K562 (cell line): ENCODE measurements at regions of chr3 and their contacts with region 1.

Region 1: DNA sequence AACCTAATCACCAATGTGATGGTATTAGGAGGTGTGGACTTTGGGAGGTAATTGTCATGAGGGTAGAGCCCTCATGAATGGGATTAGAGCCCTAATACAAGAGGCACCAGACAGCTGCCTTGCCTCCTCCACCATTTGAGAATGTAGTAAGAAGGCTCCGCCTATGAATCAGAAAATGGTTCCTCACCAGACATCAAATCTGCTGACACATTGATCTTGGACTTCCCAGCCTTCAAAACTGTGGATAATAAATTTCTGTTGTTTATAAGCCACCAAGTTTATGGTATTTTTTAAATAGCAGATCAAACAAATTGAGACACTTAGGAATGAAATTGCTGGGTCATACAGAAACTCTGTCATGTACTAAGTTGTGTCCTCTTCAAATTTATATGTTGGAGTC is 56.8 kb upstream of the COL6A5 start:
- DNase-seq: no peak
- ATAC-seq: no peak
- H3K4me3 ChIP-seq: no peak overlapping the region
- H3K27ac ChIP-seq: no peak overlapping the region
- H3K4me1 ChIP-seq: no peaks in the 10 kb centered on the region; a peak in 1 of 5 replicates
- H3K27me3 ChIP-seq: no peaks in the 10 kb centered on the region
- CTCF ChIP-seq: no peak
- EP300 ChIP-seq: no peak
- POLR2A ChIP-seq: no peak
- RAD21 ChIP-seq: no peak

Region 2: DNA sequence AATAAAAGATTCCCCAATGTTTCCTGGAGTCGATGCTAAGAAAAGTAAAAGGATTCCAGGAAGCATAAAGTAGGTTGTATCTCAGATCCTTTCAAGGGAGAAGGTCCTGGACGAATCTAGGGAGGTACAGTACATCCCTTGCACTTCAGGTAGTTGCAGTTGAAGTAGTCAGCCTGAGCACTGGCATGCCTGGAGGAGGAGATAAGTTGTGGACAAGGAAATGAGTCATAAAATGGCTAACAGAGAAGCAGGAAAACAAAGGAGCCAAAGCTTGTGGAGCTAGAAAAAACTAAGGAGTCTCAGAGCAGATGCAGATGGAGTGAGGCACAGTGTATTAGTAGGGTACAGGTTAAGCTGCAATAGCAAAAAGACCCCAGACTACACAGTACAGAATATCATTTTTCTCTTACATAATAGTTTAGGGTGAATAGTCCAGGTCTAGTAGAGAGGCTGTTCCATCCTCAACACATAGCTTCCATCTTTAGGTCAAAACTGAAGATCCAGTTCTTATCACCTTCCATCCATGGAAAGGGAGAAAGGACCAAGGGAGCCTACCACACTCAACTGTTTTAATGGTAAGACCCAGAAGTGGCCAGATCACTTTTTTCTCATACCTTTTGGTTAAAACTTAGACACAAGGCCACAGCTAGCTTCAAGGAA is 98.1 kb after region 1 on chr3:
- CTCF ChIA-PET with region 1: no interaction called
- POLR2A ChIA-PET with region 1: no interaction called
- in situ Hi-C with region 1: no loop called
- intact Hi-C with region 1: loop called (anchors 5 kb)
- DNase-seq: peak; percentile 67 to 89 (median 72)
- ATAC-seq: peak; percentile 86
- H3K4me3 ChIP-seq: no peak overlapping the region
- H3K27ac ChIP-seq: peak overlapping the region; percentile 87
- H3K4me1 ChIP-seq: peaks cover 9 to 85% of the 10 kb centered on the region in 2 experiments; a peak in 4 of 5 replicates
- H3K27me3 ChIP-seq: no peaks in the 10 kb centered on the region
- CTCF ChIP-seq: no peak
- EP300 ChIP-seq: peak; percentile 87
- POLR2A ChIP-seq: no peak
- RAD21 ChIP-seq: no peak

Region 3: GRCh38 chr3:130529513-130530215 is 241.0 kb after region 1 on chr3:
- CTCF ChIA-PET with region 1: no interaction called
- POLR2A ChIA-PET with region 1: no interaction called
- in situ Hi-C with region 1: loop called (anchors 5 kb)
- intact Hi-C with region 1: no loop called
- DNase-seq: no peak
- ATAC-seq: no peak
- H3K4me3 ChIP-seq: no peak overlapping the region
- H3K27ac ChIP-seq: no peak overlapping the region
- H3K4me1 ChIP-seq: no peaks in the 10 kb centered on the region
- H3K27me3 ChIP-seq: no peaks in the 10 kb centered on the region; a peak in 4 of 5 replicates
- CTCF ChIP-seq: no peak
- EP300 ChIP-seq: no peak
- POLR2A ChIP-seq: no peak
- RAD21 ChIP-seq: no peak